ENCODE measurements at regions of chr9 and their contacts with region 1.

Region 1: GRCh38 chr9:110427497-110428104 is 89.9 kb upstream of the TXNDC8 start:
- DNase-seq: no peak
- H3K4me3 Mint-ChIP-seq: no peak overlapping the region
- H3K27ac Mint-ChIP-seq: no peak overlapping the region
- H3K4me1 Mint-ChIP-seq: no peaks in the 10 kb centered on the region
- H3K27me3 Mint-ChIP-seq: no peaks in the 10 kb centered on the region

Region 2: DNA sequence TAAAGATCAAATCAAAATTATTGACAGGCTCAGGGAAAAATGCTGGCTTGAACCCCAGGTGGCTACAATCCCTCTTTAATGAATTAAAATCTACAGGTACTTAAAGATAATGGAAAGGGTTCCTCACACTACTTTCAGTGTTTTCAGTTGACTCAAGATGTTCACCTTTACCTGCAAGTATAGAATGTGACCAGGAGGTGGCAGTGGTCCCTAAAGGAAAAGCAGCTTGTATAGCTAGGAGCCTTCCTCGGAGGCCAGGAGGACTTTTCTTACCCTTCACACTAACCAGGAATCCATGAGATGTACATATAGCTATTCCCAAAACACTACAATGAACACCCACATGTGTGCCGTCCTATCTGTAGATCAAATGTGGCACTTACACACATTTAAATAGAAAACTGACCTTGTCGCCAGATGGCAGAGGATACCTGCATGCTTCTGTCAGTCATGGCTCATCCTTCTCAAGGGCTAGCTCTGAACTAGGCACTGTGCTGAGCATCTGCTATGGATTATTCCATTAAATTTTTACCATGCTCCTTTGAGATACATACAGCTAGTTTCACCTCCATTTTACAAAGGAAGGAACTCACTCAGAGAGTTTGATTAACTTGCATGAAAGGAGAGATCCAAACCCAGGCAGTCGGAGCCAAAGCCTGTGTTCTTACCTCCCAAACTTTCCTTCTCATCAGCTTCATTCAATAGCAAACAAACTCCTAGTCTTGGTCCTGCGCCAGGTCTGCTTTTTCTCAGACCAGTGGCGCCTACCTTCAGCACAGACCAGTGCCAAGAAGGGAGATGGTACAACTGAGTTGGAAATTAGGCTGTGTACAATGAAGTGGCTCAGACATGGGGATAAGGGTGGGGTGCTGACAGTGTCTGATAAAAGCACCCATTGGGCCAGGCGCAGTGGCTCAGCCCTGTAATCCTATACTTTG is 244.1 kb before region 1 on chr9:
- intact Hi-C with region 1: loop called (anchors 2 kb)
- DNase-seq: peak; percentile 44
- H3K4me3 Mint-ChIP-seq: no peak overlapping the region
- H3K27ac Mint-ChIP-seq: no peak overlapping the region
- H3K4me1 Mint-ChIP-seq: peaks cover 20% of the 10 kb centered on the region
- H3K27me3 Mint-ChIP-seq: peaks cover 3% of the 10 kb centered on the region

Region 3: GRCh38 chr9:110364451-110364850 is 63.1 kb before region 1 on chr9:
- intact Hi-C with region 1: no loop called
- DNase-seq: no peak
- H3K4me3 Mint-ChIP-seq: no peak overlapping the region
- H3K27ac Mint-ChIP-seq: no peak overlapping the region
- H3K4me1 Mint-ChIP-seq: no peaks in the 10 kb centered on the region
- H3K27me3 Mint-ChIP-seq: peaks cover 3% of the 10 kb centered on the region

Region 4: DNA sequence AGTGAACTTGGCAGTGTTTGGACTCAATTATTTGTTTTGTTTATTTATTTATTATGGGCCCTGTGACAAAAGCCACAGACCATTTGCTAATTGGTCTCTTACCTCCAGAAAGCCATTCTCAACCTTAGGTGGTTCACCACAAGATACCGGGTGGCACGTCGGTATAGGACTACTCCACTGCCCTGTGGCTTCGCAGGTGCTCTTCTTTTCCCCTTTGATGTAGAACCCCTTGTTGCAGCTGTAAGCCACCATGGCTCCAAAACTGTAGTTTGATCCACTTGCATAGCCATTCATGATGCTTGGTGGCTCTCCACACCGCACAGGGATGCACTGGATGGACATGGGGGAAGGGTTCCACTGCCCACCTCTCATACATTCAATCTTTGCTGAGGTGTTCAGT is 16.6 kb before region 1 on chr9:
- intact Hi-C with region 1: no loop called
- DNase-seq: no peak
- H3K4me3 Mint-ChIP-seq: no peak overlapping the region
- H3K27ac Mint-ChIP-seq: no peak overlapping the region
- H3K4me1 Mint-ChIP-seq: no peaks in the 10 kb centered on the region
- H3K27me3 Mint-ChIP-seq: peaks cover 1% of the 10 kb centered on the region

Measured in activated T-helper 1 cell treated with anti-CD3 and anti-CD28 coated beads, Interleukin-12 subunit alpha, Interleukin-12 subunit beta, Interleukin-2, Interleukin-4 antibody, amounts not matched to agents 30 ng/mL and 10 ng/mL and 1 ng/mL, durations not matched to agents 14 hours and 24 hours and 36 hours (primary cell).